ENCODE measurements at regions of chr3 and their contacts with region 1.

Region 1: GRCh38 chr3:9503283-9503682 is 50.3 kb downstream of the LHFPL4 start:
- DNase-seq: peak; percentile 72
- H3K4me3 ChIP-seq: no peak overlapping the region
- H3K27ac ChIP-seq: no peak overlapping the region
- H3K4me1 ChIP-seq: peaks cover 3% of the 10 kb centered on the region
- H3K27me3 ChIP-seq: peaks cover 10 to 15% of the 10 kb centered on the region in 2 experiments
- CTCF ChIP-seq: peak; percentile 88 to 95
- POLR2A ChIP-seq: no peak

Region 2: DNA sequence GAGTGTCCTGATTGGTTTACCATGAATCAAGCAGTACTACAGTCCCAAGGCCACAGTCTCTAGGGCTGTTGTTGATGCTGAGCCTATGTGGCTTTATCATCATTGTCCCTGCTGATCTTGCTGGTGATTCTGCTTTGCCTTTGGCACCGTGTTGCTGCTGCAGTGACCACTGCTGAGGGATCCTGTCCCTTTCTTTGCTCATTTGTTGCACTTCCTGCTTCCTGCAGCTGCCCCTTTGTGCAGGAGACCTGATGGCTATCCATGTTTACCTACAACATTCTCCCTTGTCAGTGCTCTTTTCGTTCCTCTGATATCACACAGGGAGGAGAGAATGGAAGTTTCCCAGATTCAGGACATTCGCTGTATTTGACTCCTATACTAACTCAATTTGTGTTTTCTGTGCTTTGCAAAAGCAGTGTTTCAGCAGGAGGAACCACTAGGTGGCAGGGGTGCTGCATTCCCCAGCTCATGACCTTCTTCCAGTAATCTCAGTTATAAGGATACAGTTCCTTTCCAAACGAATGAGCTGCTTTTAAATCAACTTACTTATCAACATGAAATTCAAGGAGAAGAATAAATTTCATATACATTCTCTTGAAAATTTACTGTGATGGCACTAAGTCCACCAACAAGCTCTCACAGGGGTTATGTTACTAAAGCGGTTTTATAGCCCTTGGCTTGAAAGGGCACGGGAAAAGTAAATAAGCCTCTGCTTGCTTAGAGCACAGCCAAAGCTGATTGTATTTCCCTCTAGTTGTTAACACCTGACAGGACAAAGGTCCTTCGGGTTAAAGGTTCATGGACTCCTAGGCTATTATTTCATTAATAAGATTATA is 150.1 kb before region 1 on chr3:
- CTCF ChIA-PET with region 1: interaction called, 19 read pairs
- POLR2A ChIA-PET with region 1: no interaction called
- dilution Hi-C with region 1: no loop called
- intact Hi-C with region 1: loop called (anchors 1 kb)
- DNase-seq: peak; percentile 81
- H3K4me3 ChIP-seq: no peak overlapping the region
- H3K27ac ChIP-seq: no peak overlapping the region
- H3K4me1 ChIP-seq: peaks cover 11% of the 10 kb centered on the region
- H3K27me3 ChIP-seq: no peaks in the 10 kb centered on the region
- CTCF ChIP-seq: peak; percentile 86 to 92
- POLR2A ChIP-seq: no peak

Region 3: DNA sequence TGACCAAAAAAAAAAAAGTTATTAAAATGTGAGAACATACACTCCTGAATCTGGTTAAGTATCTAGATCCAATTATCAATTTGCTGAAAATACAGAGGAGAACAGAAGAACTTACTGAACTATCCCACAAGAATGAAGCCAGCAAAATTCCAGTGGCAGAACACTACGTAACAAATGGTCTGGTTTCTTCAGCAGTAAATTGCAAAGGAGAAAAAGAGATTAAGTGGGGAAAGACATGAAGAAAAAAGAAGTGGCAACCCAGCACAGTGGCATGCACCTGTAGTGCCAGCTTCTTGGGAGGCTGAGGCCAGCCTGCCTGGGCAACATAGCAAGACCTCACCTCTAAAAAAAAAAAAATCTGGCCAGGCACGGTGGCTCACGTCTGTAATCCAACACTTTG is 11.8 kb before region 1 on chr3:
- CTCF ChIA-PET with region 1: interaction called, 24 read pairs
- POLR2A ChIA-PET with region 1: interaction called, 3 read pairs
- dilution Hi-C with region 1: no loop called
- intact Hi-C with region 1: no loop called
- DNase-seq: no peak
- H3K4me3 ChIP-seq: no peak overlapping the region
- H3K27ac ChIP-seq: no peak overlapping the region
- H3K4me1 ChIP-seq: no peaks in the 10 kb centered on the region
- H3K27me3 ChIP-seq: no peaks in the 10 kb centered on the region
- CTCF ChIP-seq: no peak
- POLR2A ChIP-seq: no peak

Region 4: DNA sequence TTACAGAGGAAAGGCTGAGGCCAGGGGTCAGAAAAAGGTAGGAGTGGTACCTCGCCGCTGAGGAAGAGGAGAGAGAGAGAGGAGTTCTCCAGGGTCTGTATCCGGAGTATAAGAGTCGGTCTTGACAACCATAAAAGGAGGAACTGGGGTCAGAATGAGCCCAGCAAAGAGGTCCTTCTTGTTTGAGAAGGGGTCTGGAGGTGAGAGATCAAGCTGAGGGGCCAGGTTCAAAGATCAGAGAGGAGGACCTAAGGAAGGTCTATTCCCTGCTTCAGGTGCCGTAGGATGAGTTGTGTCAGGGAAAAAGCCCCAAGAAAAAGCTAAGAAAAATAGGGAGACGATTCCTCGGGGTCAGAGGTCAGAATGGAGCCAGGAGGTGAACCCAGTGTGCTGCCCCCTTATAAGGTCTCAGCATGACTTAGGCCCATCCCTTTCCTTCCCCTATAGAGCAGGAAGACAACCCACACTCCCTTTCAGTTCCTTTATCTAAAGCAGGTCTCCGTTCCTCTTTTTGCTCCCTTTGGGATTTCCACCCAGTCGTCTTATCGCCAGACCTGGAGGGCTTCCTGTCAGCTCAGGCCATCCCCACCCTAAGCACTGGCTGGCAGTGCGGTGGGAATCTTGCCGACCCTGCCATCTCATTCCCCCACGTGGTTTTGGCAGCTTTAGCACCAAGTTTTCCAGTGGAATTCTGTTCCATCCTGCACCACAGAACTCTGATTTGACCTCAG is 146.7 kb after region 1 on chr3:
- CTCF ChIA-PET with region 1: no interaction called
- POLR2A ChIA-PET with region 1: no interaction called
- dilution Hi-C with region 1: no loop called
- intact Hi-C with region 1: loop called (anchors 5 kb)
- DNase-seq: no peak
- H3K4me3 ChIP-seq: peak overlapping the region; percentile 50 to 80 (median 77)
- H3K27ac ChIP-seq: peak overlapping the region; percentile 34
- H3K4me1 ChIP-seq: peaks cover 5% of the 10 kb centered on the region
- H3K27me3 ChIP-seq: no peaks in the 10 kb centered on the region
- CTCF ChIP-seq: no peak
- POLR2A ChIP-seq: no peak

Region 5: GRCh38 chr3:9715764-9716437 is 212.6 kb after region 1 on chr3:
- CTCF ChIA-PET with region 1: no interaction called
- POLR2A ChIA-PET with region 1: no interaction called
- dilution Hi-C with region 1: no loop called
- intact Hi-C with region 1: loop called (anchors 1 kb)
- DNase-seq: peak; percentile 89
- H3K4me3 ChIP-seq: no peak overlapping the region
- H3K27ac ChIP-seq: no peak overlapping the region
- H3K4me1 ChIP-seq: no peaks in the 10 kb centered on the region
- H3K27me3 ChIP-seq: peaks cover 3 to 5% of the 10 kb centered on the region in 2 experiments
- CTCF ChIP-seq: peak; percentile 75 to 77
- POLR2A ChIP-seq: no peak

Region 6: GRCh38 chr3:9809615-9810432 is 306.5 kb after region 1 on chr3 and contains the start of gene TTLL3:
- CTCF ChIA-PET with region 1: no interaction called
- POLR2A ChIA-PET with region 1: no interaction called
- dilution Hi-C with region 1: no loop called
- intact Hi-C with region 1: loop called (anchors 10 kb)
- DNase-seq: peak; percentile 53
- H3K4me3 ChIP-seq: peak within 1 kb of the TSS; percentile 52 to 64 (median 55)
- H3K27ac ChIP-seq: peak within 1 kb of the TSS; percentile 36
- H3K4me1 ChIP-seq: peaks cover 12% of the 10 kb centered on the region
- H3K27me3 ChIP-seq: no peaks in the 10 kb centered on the region
- CTCF ChIP-seq: peak in 1 of 2 donors; percentile 5
- POLR2A ChIP-seq: peak; percentile 72
- total RNA-seq, gene TTLL3: 41.8 and 43.5 TPM in 2 replicates

Region 7: DNA sequence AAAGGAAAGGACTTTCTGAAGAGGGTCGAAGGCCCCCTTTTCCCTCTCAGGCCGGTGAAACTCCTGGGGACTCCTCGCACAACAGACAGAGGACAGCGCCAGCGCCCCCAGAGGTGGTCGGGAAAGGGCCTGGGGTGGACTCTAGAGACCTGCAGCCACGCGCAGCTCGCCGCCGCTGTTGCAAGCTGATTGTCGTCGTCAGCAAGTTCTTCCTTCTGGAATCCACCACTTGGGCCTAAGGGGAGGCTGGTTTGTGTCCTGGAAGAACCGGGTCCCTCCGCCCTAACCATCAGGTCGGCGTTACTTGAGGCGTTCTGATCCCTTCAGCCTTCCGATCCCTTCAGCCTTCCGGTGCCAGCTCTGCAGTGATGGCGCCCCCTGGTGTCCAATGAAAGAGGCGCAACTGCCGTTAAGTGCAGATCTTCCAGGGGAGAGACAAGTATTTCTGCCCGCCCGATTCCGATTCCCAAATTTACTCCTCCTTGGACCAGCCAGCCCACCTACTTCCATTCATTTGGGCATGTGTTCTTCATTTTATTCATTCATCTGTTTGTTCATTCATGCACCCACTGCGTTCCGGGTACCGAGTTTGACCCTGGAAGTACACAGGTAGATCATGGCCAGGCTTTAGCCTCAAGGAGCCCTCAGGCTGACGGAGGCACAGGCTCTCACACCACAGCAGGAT is 1235.5 kb after region 1 on chr3:
- CTCF ChIA-PET with region 1: interaction called, 11 read pairs
- POLR2A ChIA-PET with region 1: no interaction called
- dilution Hi-C with region 1: no loop called
- intact Hi-C with region 1: no loop called
- DNase-seq: peak; percentile 70
- H3K4me3 ChIP-seq: peak overlapping the region in 1 of 3 experiments; percentile 18
- H3K27ac ChIP-seq: no peak overlapping the region
- H3K4me1 ChIP-seq: no peaks in the 10 kb centered on the region
- H3K27me3 ChIP-seq: peaks cover 0 to 5% of the 10 kb centered on the region in 2 experiments
- CTCF ChIP-seq: peak; percentile 75 to 89
- POLR2A ChIP-seq: no peak

Measured in endothelial cell of umbilical vein (primary cell).